Adrenal gland (tissue), 19 donors: ENCODE measurements at regions of chr3 and their contacts with region 1.

Region 1: DNA sequence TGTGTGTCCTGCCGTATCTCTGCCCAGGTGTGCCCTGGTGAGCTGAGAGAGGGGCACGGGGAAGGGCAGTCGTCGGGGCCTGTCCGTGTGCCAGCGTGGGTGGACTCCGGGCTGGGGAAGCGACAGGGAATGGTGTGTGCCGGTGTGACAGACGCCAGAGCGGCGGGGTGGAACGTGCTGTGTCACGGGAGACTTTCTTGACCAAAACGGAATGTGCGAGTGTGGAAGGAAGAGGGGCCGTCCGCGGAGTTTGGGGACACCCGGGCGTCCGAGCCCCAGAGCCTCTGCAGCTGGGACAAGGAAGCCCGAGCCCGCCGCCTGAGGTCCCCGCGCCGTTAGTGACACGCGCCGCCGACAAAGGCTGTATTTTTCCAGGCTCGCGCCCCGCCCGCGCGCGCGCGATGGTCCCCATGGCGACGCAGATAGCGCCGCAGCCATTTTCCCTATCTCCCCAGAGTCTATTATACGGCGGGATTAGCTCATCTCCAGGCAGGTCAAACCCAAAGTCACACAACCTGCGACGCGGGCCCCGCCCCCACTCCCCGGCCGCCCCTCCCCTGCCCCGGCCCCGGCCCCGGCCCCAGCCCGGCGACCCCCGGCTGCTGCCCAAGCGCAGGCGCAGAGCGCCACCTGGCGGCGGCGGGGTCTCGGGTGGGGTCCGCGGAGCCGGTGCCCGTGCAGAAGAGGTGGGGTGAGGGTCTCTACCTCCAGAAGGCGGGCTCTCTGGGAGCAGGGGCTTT is 4.6 kb upstream of the GATA2 start:
- DNase-seq: peak; percentile 46 to 90 (median 74)
- H3K4me3 ChIP-seq: peak overlapping the region in 1 of 4 donors; percentile 90
- H3K27ac ChIP-seq: peak overlapping the region in 1 of 5 donors; percentile 34
- H3K4me1 ChIP-seq: peaks cover 0 to 12% of the 10 kb centered on the region in 2 donors
- H3K27me3 ChIP-seq: peaks cover 38% of the 10 kb centered on the region
- CTCF ChIP-seq: peak in 4 of 6 experiments; percentile 19 to 82 (median 58)
- POLR2A ChIP-seq: no peak

Region 2: GRCh38 chr3:128170805-128171516 is 326.6 kb before region 1 on chr3:
- intact Hi-C with region 1: loop called (anchors 5 kb)
- DNase-seq: peak; percentile 65 to 91 (median 80)
- H3K4me3 ChIP-seq: no peak overlapping the region
- H3K27ac ChIP-seq: no peak overlapping the region
- H3K4me1 ChIP-seq: peaks cover 0 to 14% of the 10 kb centered on the region in 2 donors
- H3K27me3 ChIP-seq: no peaks in the 10 kb centered on the region
- CTCF ChIP-seq: peak; percentile 53 to 98 (median 92)
- POLR2A ChIP-seq: no peak

Region 3: DNA sequence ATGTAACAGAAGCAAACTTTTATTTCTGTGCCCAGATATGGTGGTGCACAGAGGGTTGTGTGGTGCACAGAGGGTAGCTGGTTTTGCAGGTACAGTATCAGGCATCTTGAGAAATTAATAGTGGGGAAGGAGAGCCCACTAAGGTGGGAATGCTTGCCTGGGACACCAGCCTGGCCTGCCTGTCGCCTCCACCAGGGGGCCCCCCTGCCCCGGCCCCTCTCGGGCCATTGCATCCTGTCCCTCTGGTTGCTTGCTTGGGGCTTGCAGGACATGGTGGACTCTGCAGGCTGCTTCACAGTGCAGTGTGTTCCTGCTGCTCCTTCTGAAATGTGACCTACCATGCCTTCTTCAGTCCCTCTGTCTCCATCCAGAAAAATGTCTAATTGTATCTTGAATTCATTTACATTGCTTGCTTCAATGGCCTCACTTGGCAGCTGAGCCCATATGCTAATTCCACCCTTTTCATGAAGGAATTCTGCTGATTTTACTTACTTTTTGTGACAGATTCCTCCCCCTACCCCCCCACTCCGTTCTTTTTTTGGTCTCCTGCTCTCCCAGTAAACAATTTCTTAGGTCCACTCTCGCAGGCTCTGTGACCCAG is 270.7 kb before region 1 on chr3:
- intact Hi-C with region 1: loop called in 1 of 2 experiments (anchors 5 kb)
- DNase-seq: peak in 6 of 7 donors; percentile 19 to 62 (median 40)
- H3K4me3 ChIP-seq: no peak overlapping the region
- H3K27ac ChIP-seq: no peak overlapping the region
- H3K4me1 ChIP-seq: no peaks in the 10 kb centered on the region
- H3K27me3 ChIP-seq: no peaks in the 10 kb centered on the region
- CTCF ChIP-seq: peak; percentile 52 to 72 (median 60)
- POLR2A ChIP-seq: no peak

Region 4: GRCh38 chr3:128426128-128426921 is 71.2 kb before region 1 on chr3:
- intact Hi-C with region 1: loop called (anchors 5 kb)
- DNase-seq: peak in 4 of 7 donors; percentile 25 to 56 (median 40)
- H3K4me3 ChIP-seq: peak overlapping the region in 1 of 4 donors; percentile 33
- H3K27ac ChIP-seq: no peak overlapping the region
- H3K4me1 ChIP-seq: peaks cover 0 to 9% of the 10 kb centered on the region in 2 donors
- H3K27me3 ChIP-seq: no peaks in the 10 kb centered on the region
- CTCF ChIP-seq: peak in 5 of 6 experiments; percentile 31 to 98 (median 95)
- POLR2A ChIP-seq: no peak

Region 5: DNA sequence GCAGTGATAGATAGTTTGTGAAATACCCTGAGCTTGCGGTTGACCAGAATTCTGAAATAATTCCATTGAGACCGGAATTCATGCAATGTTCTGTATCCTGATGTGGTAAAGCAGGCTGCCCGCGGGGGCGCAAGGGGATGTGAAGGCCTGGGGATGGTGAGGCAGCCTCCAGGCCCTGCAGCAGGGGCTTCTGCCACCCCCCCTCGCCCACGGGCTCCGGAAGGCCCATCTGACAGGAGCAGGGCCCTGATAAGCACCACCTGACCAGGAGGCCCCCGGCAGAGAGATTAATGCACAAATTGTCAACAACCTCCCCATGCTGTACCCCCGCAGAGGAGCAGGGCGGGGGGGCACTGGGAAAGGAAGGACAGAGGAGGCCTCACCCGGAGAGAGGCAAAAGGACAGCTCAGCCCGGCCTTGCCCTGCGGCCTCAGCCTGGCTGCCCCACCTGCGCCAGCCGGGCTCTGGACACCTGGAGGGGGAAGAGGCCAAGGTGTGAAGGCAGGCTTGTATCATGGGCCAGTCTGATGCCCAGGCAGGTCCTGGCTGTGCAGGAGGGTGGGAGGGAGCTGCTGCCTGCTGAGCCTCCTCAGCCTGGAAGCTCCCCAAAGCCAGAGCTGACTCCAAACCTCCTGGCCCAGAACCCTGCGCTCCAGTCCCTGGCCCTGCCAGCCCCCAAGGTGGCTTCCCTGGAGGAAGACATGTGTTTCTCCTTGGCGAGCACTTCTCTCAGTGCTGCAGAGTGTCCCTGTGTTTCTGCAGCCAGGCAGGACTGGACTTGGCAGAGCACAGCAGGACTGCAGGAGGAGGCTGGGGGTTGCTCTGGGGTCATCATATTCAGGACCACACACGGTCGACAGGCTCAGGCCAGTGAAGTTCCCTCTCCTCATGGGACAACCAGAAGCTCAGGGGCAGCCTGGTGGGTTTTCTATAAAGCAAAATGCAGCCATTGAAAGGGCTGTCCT is 106.5 kb after region 1 on chr3:
- intact Hi-C with region 1: loop called (anchors 10 kb)
- DNase-seq: no peak
- H3K4me3 ChIP-seq: no peak overlapping the region
- H3K27ac ChIP-seq: no peak overlapping the region
- H3K4me1 ChIP-seq: peaks cover 8 to 10% of the 10 kb centered on the region in 2 donors
- H3K27me3 ChIP-seq: no peaks in the 10 kb centered on the region
- CTCF ChIP-seq: no peak
- POLR2A ChIP-seq: no peak